Right ventricle myocardium inferior (tissue), 1 donor: ENCODE measurements at regions of chr6 and their contacts with region 1.

Region 1: DNA sequence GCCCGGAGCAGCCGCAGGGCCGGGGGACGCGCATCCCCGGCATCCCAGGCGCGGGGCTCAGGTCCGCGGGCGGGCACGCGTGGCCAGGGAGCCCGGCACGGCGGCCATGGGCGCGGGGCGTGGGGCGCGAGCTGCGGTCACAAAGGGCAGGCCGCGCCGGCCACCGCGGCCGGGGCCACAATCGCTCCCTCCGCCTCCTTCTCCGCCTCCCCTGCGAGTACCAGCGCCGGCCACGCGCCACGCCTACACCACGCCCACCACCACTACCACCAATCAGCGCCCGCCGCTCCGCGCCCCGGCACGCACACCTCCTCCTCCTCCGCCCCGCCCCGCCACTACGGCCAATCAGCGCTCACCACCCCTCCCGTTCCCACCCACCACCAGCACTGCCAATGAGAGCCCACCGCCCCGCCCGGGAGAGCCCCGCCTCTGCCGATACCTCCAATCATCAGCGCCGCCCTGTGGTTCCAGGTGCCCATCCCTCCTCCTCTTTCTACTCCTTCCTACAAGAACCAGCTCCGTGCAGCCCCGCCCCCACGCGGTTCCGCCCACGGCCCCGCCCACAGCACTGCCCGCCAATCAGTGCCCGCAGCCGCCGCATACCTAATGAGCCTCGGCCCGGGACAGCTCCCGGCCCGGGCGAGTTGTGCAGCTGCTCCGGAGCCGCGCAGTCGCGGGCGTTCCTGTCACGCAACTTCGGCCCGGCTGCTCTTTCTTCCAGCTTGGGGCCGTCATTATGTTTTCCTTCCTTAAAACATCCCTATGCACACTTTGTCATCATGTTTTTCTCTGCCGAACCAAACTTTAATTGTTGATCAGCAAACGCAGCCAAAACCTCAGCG is at the start of gene RPS6KA2:
- DNase-seq: peak; percentile 100
- ATAC-seq: peak; percentile 93
- total RNA-seq, gene RPS6KA2: 55.5 TPM

Region 2: DNA sequence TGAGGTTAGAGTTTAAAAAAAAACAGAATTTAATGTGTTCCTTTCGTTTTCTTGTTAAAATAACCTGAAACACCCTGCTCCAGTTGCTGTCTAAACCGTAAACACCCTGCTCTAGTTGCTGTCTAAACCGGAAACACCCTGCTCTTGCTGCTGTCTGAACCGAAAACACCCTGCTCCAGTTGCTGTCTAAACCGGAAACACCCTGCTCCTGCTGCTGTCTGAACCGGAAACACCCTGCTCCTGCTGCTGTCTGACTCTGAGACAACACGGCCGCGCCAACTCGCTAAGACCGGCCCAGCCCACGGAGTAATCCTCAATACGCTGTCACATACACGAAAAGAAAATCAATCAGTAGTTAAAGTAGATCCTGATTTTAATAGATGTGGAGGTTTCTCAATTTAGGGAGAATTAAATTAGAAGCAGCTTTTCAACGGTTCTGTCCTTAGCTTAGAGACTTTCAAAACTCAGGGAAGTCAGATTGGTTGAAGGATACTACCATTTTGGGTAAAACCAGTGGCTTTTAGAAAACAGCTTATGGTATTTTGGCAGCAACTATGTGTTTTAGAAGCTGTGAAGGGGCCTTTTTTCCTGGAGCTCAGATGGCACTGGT is 139.1 kb before region 1 on chr6:
- intact Hi-C with region 1: loop called (anchors 5 kb)
- DNase-seq: peak; percentile 77
- ATAC-seq: peak; percentile 44

Region 3: GRCh38 chr6:166671434-166672081 is 44.3 kb after region 1 on chr6:
- intact Hi-C with region 1: no loop called
- DNase-seq: no peak
- ATAC-seq: no peak

Region 4: GRCh38 chr6:166691199-166691598 is 63.9 kb after region 1 on chr6:
- intact Hi-C with region 1: loop called (anchors 5 kb)
- DNase-seq: no peak
- ATAC-seq: peak; percentile 92